Activated T-helper 1 cell treated with anti-CD3 and anti-CD28 coated beads, Interleukin-12 subunit alpha, Interleukin-12 subunit beta, Interleukin-2, Interleukin-4 antibody, amounts not matched to agents 30 ng/mL and 10 ng/mL and 1 ng/mL, durations not matched to agents 14 hours and 24 hours and 36 hours (primary cell): ENCODE measurements at regions of chr12 and their contacts with region 1.

Region 1: GRCh38 chr12:104137913-104138796 is at the start of gene NFYB:
- DNase-seq: peak; percentile 91
- H3K4me3 Mint-ChIP-seq: peak within 1 kb of the TSS; percentile 87
- H3K27ac Mint-ChIP-seq: peak within 1 kb of the TSS; percentile 88
- H3K4me1 Mint-ChIP-seq: peaks cover 16% of the 10 kb centered on the region
- H3K27me3 Mint-ChIP-seq: peaks cover 7% of the 10 kb centered on the region
- total RNA-seq, gene NFYB: 25.0 and 25.2 TPM in 2 replicates

Region 2: GRCh38 chr12:103956516-103957027 is 181.6 kb before region 1 on chr12:
- intact Hi-C with region 1: loop called (anchors 2 kb)
- DNase-seq: peak; percentile 3
- H3K4me3 Mint-ChIP-seq: peak overlapping the region; percentile 100
- H3K27ac Mint-ChIP-seq: peak overlapping the region; percentile 100
- H3K4me1 Mint-ChIP-seq: peaks cover 61% of the 10 kb centered on the region
- H3K27me3 Mint-ChIP-seq: no peaks in the 10 kb centered on the region

Region 3: DNA sequence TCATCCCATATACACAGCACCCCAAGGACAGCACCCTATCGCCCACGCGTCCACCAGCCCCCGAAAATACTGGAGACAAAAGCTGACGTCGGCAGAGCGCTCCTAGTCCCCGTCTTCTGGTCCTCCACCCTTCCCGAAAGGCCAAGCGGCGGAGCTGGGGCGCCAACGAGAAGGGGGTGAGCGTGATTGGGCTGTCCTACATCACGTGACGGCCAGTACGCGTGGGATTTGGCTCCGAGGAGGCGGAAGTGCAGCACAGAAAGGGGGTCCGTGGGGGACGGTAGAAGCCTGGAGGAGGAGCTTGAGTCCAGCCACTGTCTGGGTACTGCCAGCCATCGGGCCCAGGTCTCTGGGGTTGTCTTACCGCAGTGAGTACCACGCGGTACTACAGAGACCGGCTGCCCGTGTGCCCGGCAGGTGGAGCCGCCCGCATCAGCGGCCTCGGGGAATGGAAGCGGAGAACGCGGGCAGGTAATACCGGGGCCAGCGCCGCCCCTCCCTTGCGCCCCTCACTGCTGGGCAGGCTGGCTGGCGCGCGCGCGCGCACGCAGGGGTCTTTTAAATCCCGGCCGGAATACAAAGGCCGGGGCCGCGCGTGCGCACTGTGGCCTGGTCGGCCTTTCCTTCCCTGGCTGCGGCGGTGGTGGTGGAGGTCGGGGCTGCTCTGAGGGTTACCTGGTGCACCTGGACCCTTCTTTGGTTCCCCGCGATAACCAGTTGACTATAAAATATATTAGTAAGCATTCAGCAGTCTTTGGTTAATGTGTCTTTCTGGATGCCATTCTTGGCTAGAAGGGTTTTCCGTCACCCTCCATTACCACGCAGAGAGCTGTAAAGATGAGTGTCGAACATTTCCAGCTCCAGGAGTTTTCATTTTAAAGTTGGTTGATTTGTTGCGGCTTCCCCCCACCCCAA is 172.3 kb before region 1 on chr12 and contains the start of gene TDG:
- intact Hi-C with region 1: loop called (anchors 2 kb)
- DNase-seq: peak; percentile 95
- H3K4me3 Mint-ChIP-seq: peak within 1 kb of the TSS; percentile 98
- H3K27ac Mint-ChIP-seq: peak within 1 kb of the TSS; percentile 99
- H3K4me1 Mint-ChIP-seq: peaks cover 47% of the 10 kb centered on the region
- H3K27me3 Mint-ChIP-seq: no peaks in the 10 kb centered on the region
- total RNA-seq, gene TDG: 80.4 and 81.6 TPM in 2 replicates

Region 4: DNA sequence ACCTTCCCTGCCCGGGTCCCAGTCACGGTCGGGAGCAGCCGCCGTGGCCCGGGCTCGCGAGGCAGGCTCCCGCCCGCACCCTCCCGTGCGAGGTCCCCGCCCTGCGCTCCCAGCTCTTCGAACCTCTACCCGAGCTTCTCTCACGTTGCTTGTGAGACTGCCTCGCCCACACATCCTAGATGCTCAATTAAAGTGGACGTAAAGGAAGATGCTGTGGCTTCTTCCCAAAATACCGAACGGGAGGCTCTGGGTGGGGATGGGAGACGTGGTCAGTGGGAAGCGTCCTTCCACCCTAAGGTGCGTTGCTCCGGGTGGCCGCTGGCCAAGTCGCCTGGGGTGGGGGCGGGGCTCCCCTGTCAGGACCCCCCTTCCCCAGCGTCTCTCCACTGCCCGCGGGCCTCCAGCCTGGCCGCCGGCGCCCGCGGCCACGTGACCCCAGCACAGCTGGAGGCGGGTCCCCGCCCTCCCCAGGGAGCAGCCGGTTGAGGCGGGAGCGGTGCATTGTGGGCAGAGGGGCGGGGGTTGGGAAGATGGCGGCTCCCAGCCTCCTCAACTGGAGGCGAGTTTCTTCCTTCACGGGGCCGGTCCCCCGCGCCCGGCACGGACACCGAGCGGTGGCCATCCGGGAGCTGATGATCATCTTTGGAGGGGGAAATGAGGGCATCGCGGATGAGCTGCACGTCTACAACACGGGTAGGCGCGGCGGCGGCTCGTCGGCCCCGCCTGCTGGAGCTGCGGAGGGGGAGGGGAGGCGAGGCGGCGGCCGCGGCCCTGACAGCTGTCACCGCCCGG is 73.9 kb before region 1 on chr12 and contains the start of gene HCFC2:
- intact Hi-C with region 1: loop called (anchors 1 kb)
- DNase-seq: peak; percentile 88
- H3K4me3 Mint-ChIP-seq: peak within 1 kb of the TSS; percentile 95
- H3K27ac Mint-ChIP-seq: peak within 1 kb of the TSS; percentile 86
- H3K4me1 Mint-ChIP-seq: peaks cover 36% of the 10 kb centered on the region
- H3K27me3 Mint-ChIP-seq: peaks cover 24% of the 10 kb centered on the region
- total RNA-seq, gene HCFC2: 8.5 and 8.9 TPM in 2 replicates

Region 5: GRCh38 chr12:104108755-104109445 is 29.3 kb before region 1 on chr12:
- intact Hi-C with region 1: no loop called
- DNase-seq: peak; percentile 70
- H3K4me3 Mint-ChIP-seq: no peak overlapping the region
- H3K27ac Mint-ChIP-seq: no peak overlapping the region
- H3K4me1 Mint-ChIP-seq: peaks cover 11% of the 10 kb centered on the region
- H3K27me3 Mint-ChIP-seq: no peaks in the 10 kb centered on the region

Region 6: DNA sequence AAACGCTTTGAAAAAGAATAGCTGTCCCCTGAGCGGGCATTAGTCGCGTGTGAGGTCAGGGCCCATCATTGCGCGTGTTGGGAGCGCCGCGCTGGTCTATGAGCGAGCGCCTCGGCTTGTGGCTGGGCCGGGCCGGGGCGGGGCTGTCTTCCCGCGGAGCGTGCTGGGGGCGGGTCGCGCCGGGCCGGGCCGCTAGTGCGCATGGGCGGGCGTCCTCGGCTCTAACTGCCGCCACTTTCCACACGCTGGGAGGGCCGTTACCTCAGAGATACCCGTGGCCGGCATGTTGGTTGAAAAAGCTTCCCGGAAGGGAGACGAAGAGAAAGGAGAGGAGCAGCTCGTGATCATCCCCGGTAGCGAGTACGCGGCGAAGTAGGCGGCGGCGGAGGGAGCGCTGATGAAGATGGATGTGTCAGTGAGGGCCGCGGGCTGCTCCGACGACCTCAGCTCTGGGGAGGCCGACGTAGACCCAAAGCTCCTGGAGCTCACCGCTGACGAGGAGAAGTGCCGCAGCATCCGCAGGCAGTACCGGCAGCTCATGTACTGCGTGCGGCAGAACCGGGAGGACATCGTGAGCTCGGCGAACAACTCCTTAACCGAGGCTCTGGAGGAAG is 165.5 kb after region 1 on chr12 and contains the start of gene EID3:
- intact Hi-C with region 1: loop called (anchors 5 kb)
- DNase-seq: peak; percentile 92
- H3K4me3 Mint-ChIP-seq: peak within 1 kb of the TSS; percentile 93
- H3K27ac Mint-ChIP-seq: peak within 1 kb of the TSS; percentile 99
- H3K4me1 Mint-ChIP-seq: peaks cover 66% of the 10 kb centered on the region
- H3K27me3 Mint-ChIP-seq: no peaks in the 10 kb centered on the region
- total RNA-seq, gene EID3: 10.5 and 10.6 TPM in 2 replicates

Region 7: GRCh38 chr12:104339663-104340062 is 201.5 kb after region 1 on chr12:
- intact Hi-C with region 1: no loop called
- DNase-seq: no peak
- H3K4me3 Mint-ChIP-seq: no peak overlapping the region
- H3K27ac Mint-ChIP-seq: no peak overlapping the region
- H3K4me1 Mint-ChIP-seq: no peaks in the 10 kb centered on the region
- H3K27me3 Mint-ChIP-seq: no peaks in the 10 kb centered on the region